ENCODE measurements at regions of chr6 and their contacts with region 1.

Region 1: DNA sequence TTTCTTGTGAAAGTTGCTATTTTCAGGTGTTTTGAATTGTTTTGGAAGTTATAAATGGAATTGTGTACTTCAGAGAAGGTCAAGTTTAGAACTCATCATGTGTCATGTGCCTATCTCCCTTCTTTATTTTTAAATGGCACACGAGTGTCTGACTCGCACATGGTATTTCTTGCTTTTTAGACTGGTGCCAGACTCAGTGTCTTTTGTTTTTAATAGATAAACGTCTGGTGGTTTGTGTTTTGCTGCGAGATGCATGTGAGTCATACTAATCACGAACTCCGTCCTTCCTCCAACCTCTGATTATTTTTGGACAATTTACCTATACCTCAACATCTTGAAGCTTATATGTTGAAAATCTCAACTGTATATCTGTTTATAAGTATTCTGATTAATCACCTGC is 292.1 kb downstream of the CDKAL1 start:
- DNase-seq: no peak
- H3K4me3 ChIP-seq: no peak overlapping the region
- H3K27ac ChIP-seq: no peak overlapping the region
- H3K4me1 ChIP-seq: no peaks in the 10 kb centered on the region
- H3K27me3 ChIP-seq: no peaks in the 10 kb centered on the region
- CTCF ChIP-seq: no peak

Region 2: DNA sequence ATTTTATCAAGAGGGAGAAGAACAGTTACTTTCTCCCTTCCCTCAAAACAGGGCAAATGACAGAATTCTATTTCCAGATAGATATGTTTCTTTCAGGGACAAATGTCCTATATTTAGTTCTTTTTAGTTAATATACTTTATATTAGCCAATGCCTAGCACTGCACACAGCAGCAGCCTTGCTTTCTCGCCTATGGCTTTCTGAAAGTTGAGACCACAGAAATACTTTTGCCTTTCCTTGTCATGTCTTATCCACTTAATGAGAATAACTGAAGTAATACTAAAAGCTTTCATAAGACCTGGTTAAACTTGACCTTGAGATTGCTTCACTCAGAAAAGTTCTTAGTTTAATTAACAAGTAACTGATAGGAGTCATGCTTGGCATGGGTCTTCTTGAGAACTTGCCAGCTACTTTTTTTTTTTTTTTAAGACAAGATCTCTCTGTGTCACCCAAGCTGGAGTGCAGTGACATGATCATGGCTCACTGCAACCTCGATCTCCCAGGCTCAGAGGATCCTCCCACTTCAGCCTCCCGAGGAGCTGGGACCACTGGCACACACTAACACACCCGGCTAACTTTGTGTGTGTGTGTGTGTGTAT is 132.8 kb before region 1 on chr6:
- CTCF ChIA-PET with region 1: no interaction called
- POLR2A ChIA-PET with region 1: no interaction called
- intact Hi-C with region 1: no loop called
- DNase-seq: no peak
- H3K4me3 ChIP-seq: no peak overlapping the region
- H3K27ac ChIP-seq: no peak overlapping the region
- H3K4me1 ChIP-seq: peaks cover 11% of the 10 kb centered on the region
- H3K27me3 ChIP-seq: no peaks in the 10 kb centered on the region
- CTCF ChIP-seq: no peak

Region 3: DNA sequence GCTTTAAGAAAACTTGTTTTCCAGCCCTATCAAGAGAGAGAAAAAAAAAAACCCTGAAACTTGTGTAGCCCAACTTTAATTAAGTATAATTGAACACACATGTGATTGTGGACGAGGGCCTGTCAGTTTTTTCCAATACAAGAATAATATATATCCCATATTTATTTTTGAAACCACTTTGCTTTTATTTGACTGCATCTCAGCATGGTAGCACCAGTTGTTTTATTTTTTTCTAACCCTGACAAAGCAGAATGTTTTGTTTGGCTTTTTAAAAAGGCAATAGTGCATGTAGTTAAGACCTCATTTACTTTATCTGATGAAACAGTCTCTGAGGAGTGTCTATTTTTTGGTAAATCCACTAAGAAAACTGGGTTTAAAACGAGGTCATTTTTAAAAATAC is 34.4 kb before region 1 on chr6:
- CTCF ChIA-PET with region 1: no interaction called
- POLR2A ChIA-PET with region 1: no interaction called
- intact Hi-C with region 1: no loop called
- DNase-seq: no peak
- H3K4me3 ChIP-seq: no peak overlapping the region
- H3K27ac ChIP-seq: no peak overlapping the region
- H3K4me1 ChIP-seq: no peaks in the 10 kb centered on the region
- H3K27me3 ChIP-seq: no peaks in the 10 kb centered on the region
- CTCF ChIP-seq: no peak

Region 4: GRCh38 chr6:21538186-21538798 is 711.9 kb after region 1 on chr6:
- CTCF ChIA-PET with region 1: no interaction called
- POLR2A ChIA-PET with region 1: interaction called, 13 read pairs
- intact Hi-C with region 1: no loop called
- DNase-seq: no peak
- H3K4me3 ChIP-seq: no peak overlapping the region
- H3K27ac ChIP-seq: no peak overlapping the region
- H3K4me1 ChIP-seq: no peaks in the 10 kb centered on the region
- H3K27me3 ChIP-seq: no peaks in the 10 kb centered on the region
- CTCF ChIP-seq: no peak